Activated naive CD4-positive, alpha-beta T cell treated with anti-CD3 and anti-CD28 coated beads, Interleukin-2, amount 10 ng/mL, durations not matched to agents 7 days and 5 days (primary cell): ENCODE measurements at regions of chr13 and their contacts with region 1.

Region 1: DNA sequence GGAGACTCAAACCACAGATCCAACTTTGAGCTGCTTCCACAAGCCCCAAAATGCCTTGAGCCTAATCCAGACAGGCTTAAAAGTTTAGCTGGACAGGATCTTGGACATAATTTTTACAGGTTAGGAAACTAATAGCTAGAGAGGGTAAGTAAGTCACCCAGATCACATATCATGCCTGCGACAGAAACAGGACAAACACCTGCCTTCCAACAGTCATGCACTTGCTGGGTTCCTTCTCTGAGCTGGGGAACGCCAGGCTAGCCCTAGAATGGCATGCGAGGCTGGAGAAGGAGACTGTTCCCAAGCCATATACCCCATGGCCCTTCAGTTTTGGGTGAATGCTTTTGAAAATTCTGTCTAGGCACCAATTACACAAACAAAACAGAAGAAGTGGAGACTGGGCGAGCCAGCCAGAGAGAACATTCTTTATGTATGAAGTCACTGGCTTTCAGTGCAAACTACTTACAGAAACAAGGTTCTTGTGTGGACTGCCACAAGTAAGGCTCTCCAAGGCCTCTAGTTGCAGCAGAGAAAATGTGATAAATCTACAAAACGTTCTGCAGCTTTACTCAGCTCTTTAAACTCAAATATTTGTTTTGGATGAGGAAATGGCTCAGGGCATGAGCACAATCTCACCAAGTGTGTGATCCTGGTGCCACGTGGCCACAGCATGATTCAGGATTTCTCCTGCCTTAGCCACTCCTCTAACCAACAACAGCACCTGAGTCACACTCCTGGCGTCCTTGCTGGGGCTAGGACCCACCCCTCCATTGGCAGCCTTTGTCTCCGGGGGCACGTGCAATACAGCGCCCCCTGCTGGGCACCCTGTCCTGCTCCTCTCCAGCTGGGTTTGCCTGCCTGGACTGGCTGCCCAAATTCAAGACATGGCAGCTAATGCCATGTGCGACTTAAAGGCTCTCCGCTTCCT is 73.4 kb upstream of the UBL3 start:
- DNase-seq: peak; percentile 53
- H3K4me3 Mint-ChIP-seq: no peak overlapping the region
- H3K27ac Mint-ChIP-seq: no peak overlapping the region
- H3K4me1 Mint-ChIP-seq: peaks cover 25% of the 10 kb centered on the region
- H3K27me3 Mint-ChIP-seq: peaks cover 6% of the 10 kb centered on the region

Region 2: GRCh38 chr13:29583073-29583785 is 340.6 kb before region 1 on chr13:
- CTCF ChIA-PET with region 1: no interaction called
- DNase-seq: no peak
- H3K4me3 Mint-ChIP-seq: no peak overlapping the region
- H3K27ac Mint-ChIP-seq: no peak overlapping the region
- H3K4me1 Mint-ChIP-seq: peaks cover 18% of the 10 kb centered on the region
- H3K27me3 Mint-ChIP-seq: no peaks in the 10 kb centered on the region

Region 3: GRCh38 chr13:29868581-29868980 is 55.2 kb before region 1 on chr13:
- CTCF ChIA-PET with region 1: no interaction called
- DNase-seq: no peak
- H3K4me3 Mint-ChIP-seq: no peak overlapping the region
- H3K27ac Mint-ChIP-seq: no peak overlapping the region
- H3K4me1 Mint-ChIP-seq: no peaks in the 10 kb centered on the region
- H3K27me3 Mint-ChIP-seq: peaks cover 35% of the 10 kb centered on the region

Region 4: GRCh38 chr13:29911781-29912418 is 11.9 kb before region 1 on chr13:
- CTCF ChIA-PET with region 1: interaction called, 11 read pairs
- DNase-seq: no peak
- H3K4me3 Mint-ChIP-seq: no peak overlapping the region
- H3K27ac Mint-ChIP-seq: no peak overlapping the region
- H3K4me1 Mint-ChIP-seq: peaks cover 10% of the 10 kb centered on the region
- H3K27me3 Mint-ChIP-seq: peaks cover 8% of the 10 kb centered on the region

Region 5: DNA sequence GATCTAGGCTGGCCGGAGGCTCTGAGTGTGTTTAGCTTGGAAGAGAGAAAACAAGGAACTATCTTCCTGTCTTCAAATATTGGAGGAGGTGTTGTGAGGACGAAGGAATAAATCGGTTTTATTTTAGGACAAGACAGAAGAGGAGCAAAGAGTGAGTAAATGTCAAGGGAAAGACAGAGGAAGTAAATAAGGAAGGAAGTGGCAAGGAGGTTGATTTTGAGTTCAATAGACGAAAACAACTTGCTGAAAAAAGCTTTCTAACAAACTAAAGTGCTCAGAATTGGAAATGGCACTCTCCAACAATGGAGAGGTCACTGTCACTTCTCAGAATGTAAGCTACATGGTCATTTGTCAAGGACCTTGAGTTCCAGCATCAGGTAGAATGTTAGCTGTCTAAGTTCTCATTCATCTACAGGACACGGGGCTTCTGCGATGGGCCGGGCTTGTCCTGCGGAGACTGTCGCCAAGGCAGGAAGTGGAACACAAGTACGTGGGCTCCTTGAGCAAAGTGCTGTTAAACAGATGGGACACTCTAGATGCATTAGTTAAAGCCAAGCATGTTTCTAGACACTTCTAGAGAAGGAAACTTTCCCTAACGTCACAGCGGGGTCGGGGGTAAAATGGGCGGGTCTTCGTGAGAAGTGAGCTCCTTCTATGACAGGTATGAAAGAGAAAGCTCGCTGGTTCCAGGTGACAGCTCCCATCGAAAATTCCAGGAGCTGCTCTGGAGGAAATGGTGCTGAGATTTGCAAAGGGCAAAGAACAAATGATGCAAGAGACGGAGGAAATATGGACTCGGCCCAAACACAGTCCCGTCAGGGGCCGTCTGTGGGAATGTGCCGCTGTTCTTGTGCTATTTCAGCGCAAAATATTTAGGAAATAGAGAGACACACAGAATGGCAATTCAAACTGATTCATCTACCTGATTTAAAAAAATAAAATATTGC is 30.5 kb after region 1 on chr13:
- CTCF ChIA-PET with region 1: interaction called, 11 read pairs
- DNase-seq: peak; percentile 71
- H3K4me3 Mint-ChIP-seq: peak overlapping the region; percentile 61
- H3K27ac Mint-ChIP-seq: peak overlapping the region; percentile 94
- H3K4me1 Mint-ChIP-seq: peaks cover 66% of the 10 kb centered on the region
- H3K27me3 Mint-ChIP-seq: peaks cover 4% of the 10 kb centered on the region